ENCODE measurements at regions of chr1 and their contacts with region 1.

Region 1: GRCh38 chr1:173429471-173430402 is 47.4 kb upstream of the PRDX6 start:
- DNase-seq: peak; percentile 76
- H3K4me3 Mint-ChIP-seq: peak overlapping the region; percentile 58
- H3K27ac Mint-ChIP-seq: peak overlapping the region; percentile 78
- H3K4me1 Mint-ChIP-seq: peaks cover 54% of the 10 kb centered on the region
- H3K27me3 Mint-ChIP-seq: no peaks in the 10 kb centered on the region
- CTCF ChIP-seq: peak; percentile 48

Region 2: GRCh38 chr1:172642970-172643369 is 786.8 kb before region 1 on chr1:
- CTCF ChIA-PET with region 1: no interaction called
- intact Hi-C with region 1: no loop called
- DNase-seq: peak; percentile 81
- H3K4me3 Mint-ChIP-seq: peak overlapping the region; percentile 23
- H3K27ac Mint-ChIP-seq: peak overlapping the region; percentile 90
- H3K4me1 Mint-ChIP-seq: peaks cover 66% of the 10 kb centered on the region
- H3K27me3 Mint-ChIP-seq: no peaks in the 10 kb centered on the region
- CTCF ChIP-seq: no peak

Region 3: GRCh38 chr1:173476664-173477285 is 47.0 kb after region 1 on chr1:
- CTCF ChIA-PET with region 1: interaction called, 4 read pairs
- intact Hi-C with region 1: loop called (anchors 2 kb)
- DNase-seq: peak; percentile 91
- H3K4me3 Mint-ChIP-seq: peak overlapping the region; percentile 84
- H3K27ac Mint-ChIP-seq: peak overlapping the region; percentile 63
- H3K4me1 Mint-ChIP-seq: peaks cover 49% of the 10 kb centered on the region
- H3K27me3 Mint-ChIP-seq: no peaks in the 10 kb centered on the region
- CTCF ChIP-seq: no peak

Region 4: GRCh38 chr1:173507205-173507846 is 77.6 kb after region 1 on chr1:
- CTCF ChIA-PET with region 1: interaction called, 7 read pairs
- intact Hi-C with region 1: loop called (anchors 2 kb)
- DNase-seq: peak; percentile 41
- H3K4me3 Mint-ChIP-seq: peak overlapping the region; percentile 37
- H3K27ac Mint-ChIP-seq: peak overlapping the region; percentile 40
- H3K4me1 Mint-ChIP-seq: peaks cover 32% of the 10 kb centered on the region
- H3K27me3 Mint-ChIP-seq: no peaks in the 10 kb centered on the region
- CTCF ChIP-seq: no peak

Region 5: DNA sequence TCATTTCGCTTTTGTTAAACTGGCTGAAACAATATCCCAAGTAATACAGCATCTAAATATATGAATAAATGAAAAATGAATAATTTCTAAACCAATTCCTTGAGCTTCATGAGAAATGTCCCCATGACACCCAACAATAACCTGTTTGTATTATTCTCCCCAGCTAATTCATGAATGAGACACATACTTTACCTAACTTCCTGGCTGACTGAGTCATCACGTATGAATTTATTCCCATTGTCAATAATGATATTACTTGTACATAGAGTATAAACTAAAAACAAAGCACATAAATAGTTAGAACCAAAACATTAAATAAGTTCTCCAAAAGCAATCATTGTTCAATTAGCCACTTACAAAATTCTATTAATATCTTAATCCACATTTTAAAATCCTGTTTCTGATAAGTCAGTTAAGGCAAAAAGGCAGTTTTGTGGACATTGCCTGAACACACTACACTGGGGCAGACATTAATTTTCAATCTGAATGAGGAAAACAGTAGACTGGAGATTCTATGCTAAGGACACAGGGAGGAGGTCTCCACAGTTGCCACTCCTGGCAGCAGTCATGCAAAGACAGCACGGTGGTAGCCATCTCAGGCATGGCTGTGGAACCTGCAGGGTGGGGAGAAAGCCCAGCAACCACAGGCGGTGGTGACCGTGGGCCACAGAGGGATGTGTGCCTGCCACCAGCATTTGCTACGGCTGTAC is 125.0 kb after region 1 on chr1:
- CTCF ChIA-PET with region 1: no interaction called
- intact Hi-C with region 1: loop called (anchors 2 kb)
- DNase-seq: peak; percentile 17
- H3K4me3 Mint-ChIP-seq: no peak overlapping the region
- H3K27ac Mint-ChIP-seq: peak overlapping the region; percentile 94
- H3K4me1 Mint-ChIP-seq: peaks cover 22% of the 10 kb centered on the region
- H3K27me3 Mint-ChIP-seq: no peaks in the 10 kb centered on the region
- CTCF ChIP-seq: no peak

Region 6: DNA sequence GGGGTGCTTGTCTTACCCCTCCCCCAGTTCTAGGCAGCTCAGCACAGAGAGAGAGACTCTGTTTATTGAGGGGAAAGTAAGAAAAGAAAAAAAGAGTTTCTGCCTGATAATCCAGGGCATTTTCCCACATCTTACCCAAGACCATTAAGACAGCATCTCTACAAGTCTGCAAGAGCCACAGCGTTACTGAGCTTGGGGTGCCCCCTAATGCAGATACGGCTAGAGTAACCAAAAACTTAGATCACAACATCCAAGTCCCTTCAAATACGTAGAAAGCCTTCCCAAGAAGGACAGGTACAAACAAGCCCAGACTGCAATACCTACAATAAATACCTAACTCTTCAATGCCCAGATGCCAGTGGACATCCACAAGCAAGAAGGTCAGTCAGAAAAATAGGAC is 199.2 kb after region 1 on chr1:
- CTCF ChIA-PET with region 1: no interaction called
- intact Hi-C with region 1: loop called (anchors 5 kb)
- DNase-seq: peak; percentile 15
- H3K4me3 Mint-ChIP-seq: no peak overlapping the region
- H3K27ac Mint-ChIP-seq: no peak overlapping the region
- H3K4me1 Mint-ChIP-seq: no peaks in the 10 kb centered on the region
- H3K27me3 Mint-ChIP-seq: no peaks in the 10 kb centered on the region
- CTCF ChIP-seq: no peak

Region 7: GRCh38 chr1:173714759-173715537 is 285.2 kb after region 1 on chr1 and contains the start of gene KLHL20:
- CTCF ChIA-PET with region 1: interaction called, 5 read pairs
- intact Hi-C with region 1: loop called (anchors 2 kb)
- DNase-seq: peak; percentile 91
- H3K4me3 Mint-ChIP-seq: peak within 1 kb of the TSS; percentile 92
- H3K27ac Mint-ChIP-seq: peak within 1 kb of the TSS; percentile 87
- H3K4me1 Mint-ChIP-seq: peaks cover 9% of the 10 kb centered on the region
- H3K27me3 Mint-ChIP-seq: peaks cover 20% of the 10 kb centered on the region
- CTCF ChIP-seq: no peak
- total RNA-seq, gene KLHL20: 21.6 and 22.2 TPM in 2 replicates

Region 8: GRCh38 chr1:173824331-173825081 is 394.8 kb after region 1 on chr1 and contains the starts of genes CENPL and DARS2:
- CTCF ChIA-PET with region 1: interaction called, 14 read pairs
- intact Hi-C with region 1: loop called (anchors 2 kb)
- DNase-seq: peak; percentile 93
- H3K4me3 Mint-ChIP-seq: peak within 1 kb of the TSS; percentile 97
- H3K27ac Mint-ChIP-seq: peak within 1 kb of the TSS; percentile 96
- H3K4me1 Mint-ChIP-seq: peaks cover 28% of the 10 kb centered on the region
- H3K27me3 Mint-ChIP-seq: no peaks in the 10 kb centered on the region
- CTCF ChIP-seq: no peak
- total RNA-seq, gene CENPL: 30.3 and 31.2 TPM in 2 replicates
- total RNA-seq, gene DARS2: 48.4 and 56.3 TPM in 2 replicates